Right ventricle myocardium inferior (tissue), 1 donor: ENCODE measurements at regions of chr19 and their contacts with region 1.

Region 1: GRCh38 chr19:1241417-1242095 is at the start of gene ATP5F1D:
- DNase-seq: peak; percentile 97
- ATAC-seq: peak; percentile 64
- total RNA-seq, gene ATP5F1D: 656 TPM

Region 2: GRCh38 chr19:1221141-1221903 is 20.2 kb before region 1 on chr19:
- intact Hi-C with region 1: loop called (anchors 1 kb)
- DNase-seq: peak; percentile 84
- ATAC-seq: peak; percentile 73